ENCODE measurements at regions of chr11 and their contacts with region 1.

Region 1: DNA sequence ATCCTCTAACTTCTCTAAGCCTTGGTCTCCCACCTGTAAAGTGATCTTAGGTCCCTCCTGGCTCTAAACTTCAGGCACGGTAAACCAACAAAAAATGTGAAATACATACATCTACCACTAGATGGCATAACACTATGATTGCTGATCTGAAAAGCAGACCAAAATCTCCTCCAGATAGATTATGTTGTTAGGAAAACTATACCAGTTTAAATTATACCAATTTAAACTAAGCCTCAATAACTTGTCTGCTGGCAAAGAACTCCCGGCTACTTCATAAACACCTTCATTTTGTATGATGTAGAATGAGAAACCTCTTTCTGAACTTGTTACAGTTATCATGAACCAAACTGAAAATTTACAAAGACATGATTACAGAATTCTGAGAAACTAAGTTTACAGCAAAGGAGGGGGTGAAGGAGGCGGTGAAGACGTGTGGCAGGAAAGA is 85.9 kb downstream of the SBF2 start:
- DNase-seq: peak in 1 of 2 experiments; percentile 72
- H3K4me3 ChIP-seq: no peak overlapping the region
- H3K4me1 ChIP-seq: no peaks in the 10 kb centered on the region
- H3K27me3 ChIP-seq: no peaks in the 10 kb centered on the region

Region 2: GRCh38 chr11:10293423-10294289 is 85.5 kb after region 1 on chr11 and contains the start of gene SBF2:
- in situ Hi-C with region 1: loop called (anchors 10 kb)
- DNase-seq: peak; percentile 64 to 90
- H3K4me3 ChIP-seq: peak within 1 kb of the TSS; percentile 56
- H3K4me1 ChIP-seq: peaks cover 36% of the 10 kb centered on the region
- H3K27me3 ChIP-seq: no peaks in the 10 kb centered on the region